ENCODE measurements at regions of chr10 and their contacts with region 1.

Region 1: DNA sequence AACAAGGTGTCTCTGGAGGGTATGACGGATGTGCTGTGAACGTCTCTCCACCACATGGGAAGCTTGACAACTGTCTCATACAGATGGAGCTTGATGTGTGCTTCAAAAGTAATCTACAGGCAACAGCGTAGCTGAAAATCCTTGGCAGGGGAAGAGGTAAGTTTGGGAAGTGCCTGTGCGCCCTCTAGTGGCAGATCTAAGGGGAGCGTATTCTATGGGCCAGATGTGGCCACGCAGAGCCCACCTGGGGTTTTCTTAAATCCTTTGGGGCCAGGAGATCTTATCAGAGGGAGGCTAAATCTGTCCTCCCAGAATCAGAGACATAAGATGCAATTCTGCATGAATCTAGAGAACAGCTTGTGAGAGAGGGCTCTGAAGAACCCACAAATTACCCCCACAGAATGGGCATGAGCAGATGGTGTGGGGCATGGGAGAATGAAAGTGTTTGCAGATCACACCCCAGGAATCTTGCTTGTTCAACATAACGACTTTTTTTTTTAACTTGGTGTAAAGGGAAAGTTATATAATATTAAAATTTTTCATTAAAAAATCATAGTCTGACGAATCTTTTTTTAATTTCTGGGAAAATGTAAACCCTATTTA is 91.2 kb upstream of the MPP7 start:
- DNase-seq: peak; percentile 30
- ATAC-seq: peak; percentile 56
- H3K4me3 Mint-ChIP-seq: no peak overlapping the region
- H3K27ac Mint-ChIP-seq: no peak overlapping the region
- H3K4me1 Mint-ChIP-seq: peaks cover 4% of the 10 kb centered on the region
- H3K27me3 Mint-ChIP-seq: peaks cover 4% of the 10 kb centered on the region
- CTCF ChIP-seq: peak; percentile 85

Region 2: GRCh38 chr10:28241741-28242399 is 152.2 kb before region 1 on chr10:
- CTCF ChIA-PET with region 1: interaction called, 13 read pairs
- POLR2A ChIA-PET with region 1: no interaction called
- intact Hi-C with region 1: no loop called
- DNase-seq: no peak
- ATAC-seq: peak; percentile 72
- H3K4me3 Mint-ChIP-seq: no peak overlapping the region
- H3K27ac Mint-ChIP-seq: no peak overlapping the region
- H3K4me1 Mint-ChIP-seq: no peaks in the 10 kb centered on the region
- H3K27me3 Mint-ChIP-seq: peaks cover 13% of the 10 kb centered on the region
- CTCF ChIP-seq: no peak

Region 3: DNA sequence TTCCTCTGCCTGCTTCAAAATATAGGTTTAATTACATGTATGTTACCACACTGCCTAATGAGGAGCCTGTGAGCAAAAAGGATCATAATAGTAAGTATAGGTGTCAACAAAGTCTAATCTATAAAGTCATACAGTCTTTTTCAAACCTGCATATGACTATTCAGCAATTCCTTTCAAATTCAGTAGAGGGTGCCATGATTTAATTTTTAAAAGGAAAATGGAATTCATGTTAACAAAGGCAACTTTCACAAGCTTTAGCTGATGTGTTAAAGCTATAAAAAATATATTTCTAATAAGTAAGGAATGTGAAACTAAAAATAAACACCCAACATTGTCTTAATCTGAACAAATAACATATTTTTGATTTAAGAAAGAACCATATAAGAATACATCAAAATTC is 143.3 kb before region 1 on chr10:
- CTCF ChIA-PET with region 1: interaction called, 33 read pairs
- POLR2A ChIA-PET with region 1: no interaction called
- intact Hi-C with region 1: loop called (anchors 1 kb)
- DNase-seq: no peak
- ATAC-seq: no peak
- H3K4me3 Mint-ChIP-seq: no peak overlapping the region
- H3K27ac Mint-ChIP-seq: no peak overlapping the region
- H3K4me1 Mint-ChIP-seq: no peaks in the 10 kb centered on the region
- H3K27me3 Mint-ChIP-seq: peaks cover 2% of the 10 kb centered on the region
- CTCF ChIP-seq: no peak

Region 4: DNA sequence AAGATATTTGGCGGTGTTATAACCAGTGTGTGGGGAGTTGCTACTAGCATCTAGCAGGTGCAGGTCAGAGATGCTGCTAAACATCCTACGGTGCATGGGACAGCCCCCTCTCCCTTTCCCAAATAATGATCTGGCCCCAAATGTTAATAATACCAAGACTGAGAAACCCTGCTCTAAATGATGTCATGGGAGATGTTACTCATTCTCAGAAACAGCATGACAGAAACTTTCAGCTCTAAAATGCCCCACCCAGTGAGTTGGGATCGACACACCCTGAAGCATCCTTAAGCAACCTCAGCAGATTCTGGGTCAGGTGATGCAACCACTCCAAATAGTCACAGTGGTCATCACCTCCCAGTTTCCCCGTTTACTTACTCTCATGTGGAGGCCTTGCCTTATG is 17.6 kb after region 1 on chr10:
- CTCF ChIA-PET with region 1: no interaction called
- POLR2A ChIA-PET with region 1: no interaction called
- intact Hi-C with region 1: no loop called
- DNase-seq: no peak
- ATAC-seq: peak; percentile 37
- H3K4me3 Mint-ChIP-seq: no peak overlapping the region
- H3K27ac Mint-ChIP-seq: no peak overlapping the region
- H3K4me1 Mint-ChIP-seq: peaks cover 8% of the 10 kb centered on the region
- H3K27me3 Mint-ChIP-seq: peaks cover 14% of the 10 kb centered on the region
- CTCF ChIP-seq: no peak

Region 5: DNA sequence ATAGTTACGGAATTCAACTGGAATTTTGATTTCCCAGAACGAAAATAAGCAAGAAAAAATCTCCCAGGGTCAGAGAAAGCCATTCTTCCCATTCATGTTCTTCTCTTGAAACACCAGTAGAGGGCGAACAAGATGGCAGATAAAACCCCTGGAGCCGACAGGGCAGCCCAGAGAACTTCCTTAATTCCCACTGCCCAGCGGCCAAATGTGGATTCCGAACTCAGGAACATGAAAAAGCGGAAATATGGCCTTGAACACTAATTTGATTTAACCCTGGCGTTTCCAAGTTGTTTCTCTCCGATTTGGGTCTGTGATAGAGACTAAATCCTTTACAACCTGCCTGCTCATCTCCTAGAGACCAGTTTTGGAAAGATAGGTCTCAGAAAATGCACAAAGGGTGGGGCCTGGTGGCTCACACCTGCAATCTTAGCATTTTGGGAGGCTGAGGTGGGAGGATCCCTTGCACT is 38.2 kb after region 1 on chr10:
- CTCF ChIA-PET with region 1: no interaction called
- POLR2A ChIA-PET with region 1: no interaction called
- intact Hi-C with region 1: no loop called
- DNase-seq: no peak
- ATAC-seq: peak; percentile 58
- H3K4me3 Mint-ChIP-seq: peak overlapping the region; percentile 66
- H3K27ac Mint-ChIP-seq: no peak overlapping the region
- H3K4me1 Mint-ChIP-seq: peaks cover 6% of the 10 kb centered on the region
- H3K27me3 Mint-ChIP-seq: no peaks in the 10 kb centered on the region
- CTCF ChIP-seq: peak; percentile 75